ENCODE measurements at regions of chr15 and their contacts with region 1.

Region 1: DNA sequence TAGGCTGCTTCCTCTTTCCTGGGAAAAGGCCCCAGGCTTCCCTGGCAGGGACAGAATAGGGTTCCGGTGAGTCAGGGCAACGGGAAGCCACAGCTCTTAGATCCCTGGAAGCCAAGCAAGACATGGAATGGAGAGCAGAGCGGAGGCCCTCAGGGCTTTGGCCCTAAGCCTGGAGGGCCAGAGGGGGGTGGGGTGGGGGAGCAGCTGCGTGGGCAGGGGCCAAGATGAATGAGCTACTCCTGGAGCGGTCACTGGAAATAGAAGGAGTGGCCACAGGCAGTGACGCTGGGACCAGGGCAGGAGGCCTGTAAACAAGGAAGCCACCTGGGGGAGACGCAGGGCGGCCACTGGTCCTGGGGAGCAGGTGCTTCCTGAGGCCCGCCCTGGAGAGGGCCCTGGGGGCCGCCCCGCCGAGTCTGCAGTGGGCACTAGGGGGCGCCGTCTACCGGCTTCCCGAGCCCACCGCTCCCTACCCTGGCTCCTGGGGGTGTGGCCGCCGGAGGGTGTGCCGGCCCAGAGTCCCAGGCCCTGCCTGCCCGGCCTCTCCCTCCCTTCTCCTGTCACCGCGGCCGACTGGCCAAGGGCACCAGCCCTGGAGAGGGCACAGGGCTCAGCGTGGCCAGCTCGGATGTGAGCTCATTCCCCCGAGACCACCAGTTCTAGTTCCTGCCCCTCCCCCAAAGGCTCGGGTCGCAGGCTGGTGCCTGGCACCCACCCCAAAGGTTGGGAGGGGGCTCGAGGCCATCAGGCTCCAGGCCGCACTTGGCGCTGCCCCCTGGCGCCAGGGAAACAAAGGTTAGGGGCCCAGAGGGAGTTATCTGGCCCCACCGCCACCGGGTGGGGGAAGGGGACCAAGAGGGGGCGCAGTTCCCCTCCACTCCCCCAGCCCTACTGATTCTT is 12.1 kb downstream of the VPS18 start:
- DNase-seq: peak; percentile 98
- ATAC-seq: peak; percentile 80
- H3K4me3 ChIP-seq: peak overlapping the region; percentile 67
- H3K27ac ChIP-seq: peak overlapping the region; percentile 98
- H3K4me1 ChIP-seq: peaks cover 29% of the 10 kb centered on the region
- H3K27me3 ChIP-seq: no peaks in the 10 kb centered on the region
- CTCF ChIP-seq: peak; percentile 85

Region 2: DNA sequence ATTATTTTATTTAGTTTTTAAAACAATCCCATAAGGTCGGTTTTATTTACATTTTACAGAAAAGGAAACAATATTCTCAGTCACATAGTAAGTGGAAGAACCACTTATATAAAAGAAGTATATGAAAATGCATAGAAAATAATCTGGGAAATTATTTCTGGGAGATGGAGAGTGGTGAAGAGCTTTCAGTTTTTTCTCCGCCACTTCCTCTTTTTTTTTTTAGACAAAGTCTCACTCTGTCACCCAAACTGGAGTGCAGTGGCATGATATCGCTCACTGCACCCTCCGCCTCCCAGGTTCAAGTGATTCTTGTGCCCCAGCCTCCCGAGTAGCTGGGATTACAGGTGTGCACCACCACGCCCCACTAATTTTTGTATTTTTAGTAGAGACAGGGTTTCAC is 190.2 kb before region 1 on chr15:
- CTCF ChIA-PET with region 1: no interaction called
- POLR2A ChIA-PET with region 1: no interaction called
- intact Hi-C with region 1: no loop called
- DNase-seq: no peak
- ATAC-seq: no peak
- H3K4me3 ChIP-seq: no peak overlapping the region
- H3K27ac ChIP-seq: no peak overlapping the region
- H3K4me1 ChIP-seq: no peaks in the 10 kb centered on the region
- H3K27me3 ChIP-seq: no peaks in the 10 kb centered on the region
- CTCF ChIP-seq: no peak

Region 3: GRCh38 chr15:40825661-40826088 is 80.7 kb before region 1 on chr15:
- CTCF ChIA-PET with region 1: no interaction called
- POLR2A ChIA-PET with region 1: no interaction called
- intact Hi-C with region 1: no loop called
- DNase-seq: peak; percentile 81
- ATAC-seq: peak; percentile 36
- H3K4me3 ChIP-seq: peak overlapping the region; percentile 7; the same call in 1 of the 2 replicates
- H3K27ac ChIP-seq: peak overlapping the region; percentile 87
- H3K4me1 ChIP-seq: peaks cover 40% of the 10 kb centered on the region
- H3K27me3 ChIP-seq: no peaks in the 10 kb centered on the region
- CTCF ChIP-seq: no peak

Region 4: DNA sequence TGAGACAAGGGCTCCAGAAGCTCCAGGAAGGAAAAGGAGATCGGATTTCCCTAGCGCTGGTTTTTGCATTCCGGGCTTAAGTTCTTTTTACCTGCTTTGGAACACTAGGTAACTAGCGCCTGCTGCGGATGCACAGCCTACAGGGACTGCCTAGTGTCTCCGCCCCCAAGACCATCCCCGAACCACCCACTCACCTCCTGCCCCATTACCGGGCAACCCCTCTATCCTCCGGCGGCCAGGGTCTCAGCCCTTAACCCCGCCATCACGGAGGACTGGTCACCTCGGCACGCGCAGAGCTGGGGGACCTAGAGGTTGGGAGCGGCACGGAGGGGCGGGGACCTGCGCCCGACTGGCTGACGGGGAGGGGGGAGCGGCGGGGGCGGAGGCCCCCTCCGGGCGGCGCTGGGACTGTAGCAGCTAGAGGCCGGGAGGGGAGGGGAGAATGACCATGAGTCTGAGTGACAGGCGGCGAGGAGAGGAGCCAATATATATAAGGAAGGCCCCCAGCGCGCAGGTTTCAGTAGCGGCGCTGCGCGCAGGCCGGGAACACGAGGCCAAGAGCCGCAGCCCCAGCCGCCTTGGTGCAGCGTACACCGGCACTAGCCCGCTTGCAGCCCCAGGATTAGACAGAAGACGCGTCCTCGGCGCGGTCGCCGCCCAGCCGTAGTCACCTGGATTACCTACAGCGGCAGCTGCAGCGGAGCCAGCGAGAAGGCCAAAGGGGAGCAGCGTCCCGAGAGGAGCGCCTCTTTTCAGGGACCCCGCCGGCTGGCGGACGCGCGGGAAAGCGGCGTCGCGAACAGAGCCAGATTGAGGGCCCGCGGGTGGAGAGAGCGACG is 22.7 kb after region 1 on chr15 and contains the start of gene DLL4:
- CTCF ChIA-PET with region 1: interaction called, 16 read pairs
- POLR2A ChIA-PET with region 1: interaction called, 14 read pairs
- intact Hi-C with region 1: loop called (anchors 1 kb)
- DNase-seq: peak; percentile 77
- ATAC-seq: peak; percentile 49
- H3K4me3 ChIP-seq: peak within 1 kb of the TSS; percentile 76
- H3K27ac ChIP-seq: no peak within 1 kb of the TSS
- H3K4me1 ChIP-seq: peaks cover 45% of the 10 kb centered on the region
- H3K27me3 ChIP-seq: peaks cover 25% of the 10 kb centered on the region
- CTCF ChIP-seq: no peak
- total RNA-seq, gene DLL4: 2.2 and 2.9 TPM in 2 replicates

Region 5: DNA sequence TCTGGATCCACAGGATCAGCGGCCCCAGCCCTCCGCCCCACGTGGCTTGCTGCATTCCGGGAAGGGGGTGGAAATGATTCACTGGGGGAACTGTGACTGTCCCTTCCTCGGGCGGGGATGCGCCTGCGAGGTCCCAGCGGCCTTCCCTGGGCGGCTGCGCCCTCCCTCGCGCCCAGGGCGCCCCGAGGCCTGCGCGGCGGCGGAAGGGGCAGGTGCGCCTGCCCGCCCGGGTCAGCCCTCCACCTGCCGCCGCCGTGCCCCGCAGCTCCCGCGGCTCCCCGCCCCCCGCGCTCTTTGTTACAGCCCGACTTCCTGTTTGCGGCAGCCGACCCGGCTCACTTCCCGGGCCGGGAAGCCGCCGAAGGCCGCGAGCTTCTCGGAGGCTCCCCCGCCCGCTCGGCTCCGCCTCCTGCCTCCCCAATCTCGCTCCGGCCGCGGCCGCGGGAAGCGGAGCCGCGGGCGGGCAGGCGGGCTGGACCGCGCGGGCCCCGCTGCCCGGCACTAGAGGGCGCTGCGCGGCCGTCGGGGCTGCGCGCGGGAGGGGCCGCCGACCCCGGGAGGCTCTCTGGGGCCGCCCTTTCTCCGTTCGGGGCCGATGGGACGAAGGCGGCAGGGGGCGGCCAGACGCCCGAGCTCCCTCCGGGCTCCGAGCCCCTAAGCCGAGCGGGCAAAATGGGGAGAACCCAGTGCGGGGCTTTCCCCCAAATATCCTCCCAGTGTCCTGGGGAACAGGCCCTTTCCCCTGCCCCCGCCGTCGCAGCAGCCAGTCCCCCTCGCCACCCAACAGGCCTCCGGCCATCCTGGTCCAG is 35.4 kb after region 1 on chr15:
- CTCF ChIA-PET with region 1: interaction called, 22 read pairs
- POLR2A ChIA-PET with region 1: interaction called, 11 read pairs
- intact Hi-C with region 1: loop called (anchors 5 kb)
- DNase-seq: peak; percentile 84
- ATAC-seq: peak; percentile 78
- H3K4me3 ChIP-seq: peak overlapping the region; percentile 71
- H3K27ac ChIP-seq: peak overlapping the region; percentile 58
- H3K4me1 ChIP-seq: peaks cover 29% of the 10 kb centered on the region
- H3K27me3 ChIP-seq: no peaks in the 10 kb centered on the region
- CTCF ChIP-seq: peak; percentile 43

Region 6: DNA sequence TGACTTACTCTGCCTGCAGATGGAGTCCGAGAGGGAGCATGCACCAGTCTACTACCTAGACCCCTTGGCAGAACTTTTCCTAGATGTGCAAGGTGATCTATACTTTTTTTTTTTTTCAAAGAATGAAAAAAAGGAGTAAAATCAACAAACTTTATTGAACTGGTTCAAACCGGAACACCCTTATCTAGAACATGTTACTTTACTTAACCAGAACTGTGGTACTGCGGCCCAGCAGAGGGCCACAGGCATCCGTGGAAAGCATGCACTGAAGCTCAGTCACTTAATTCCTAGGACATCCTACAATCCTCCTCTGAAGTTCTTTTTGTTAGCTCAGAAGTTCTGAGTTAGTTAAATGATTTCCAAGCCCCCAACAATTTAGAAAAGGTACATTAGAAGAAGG is 68.5 kb after region 1 on chr15:
- CTCF ChIA-PET with region 1: no interaction called
- POLR2A ChIA-PET with region 1: no interaction called
- intact Hi-C with region 1: loop called (anchors 1 kb)
- DNase-seq: no peak
- ATAC-seq: no peak
- H3K4me3 ChIP-seq: no peak overlapping the region
- H3K27ac ChIP-seq: no peak overlapping the region
- H3K4me1 ChIP-seq: peaks cover 25% of the 10 kb centered on the region
- H3K27me3 ChIP-seq: no peaks in the 10 kb centered on the region
- CTCF ChIP-seq: no peak

Region 7: DNA sequence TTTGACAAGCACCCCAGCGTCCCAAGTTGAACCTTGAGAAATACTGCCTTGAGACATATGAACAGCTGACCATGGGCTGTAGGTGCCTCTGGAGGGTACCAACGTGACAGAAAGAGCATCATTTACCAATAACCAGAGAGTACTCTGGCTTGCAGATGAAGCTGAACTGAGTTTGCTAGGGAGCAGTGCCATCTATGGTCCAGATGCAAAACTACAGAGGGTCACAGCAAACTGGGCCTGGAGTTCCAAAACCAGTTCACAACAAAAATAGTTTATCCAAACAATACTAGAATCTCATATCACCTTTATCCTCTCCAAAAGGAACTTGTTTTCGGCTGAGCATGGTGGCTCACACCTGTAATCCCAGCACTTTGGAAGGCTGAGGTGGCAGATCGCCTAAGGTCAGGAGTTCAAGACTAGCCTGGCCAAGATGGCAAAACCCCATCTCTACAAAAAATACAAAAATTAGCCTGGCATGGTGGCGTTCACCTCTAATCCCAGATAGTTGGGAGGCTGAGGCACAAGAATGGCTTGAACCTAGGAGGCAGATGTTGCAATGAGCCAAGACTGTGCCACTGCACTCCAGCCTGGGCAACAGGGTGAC is 116.2 kb after region 1 on chr15:
- CTCF ChIA-PET with region 1: interaction called, 17 read pairs
- POLR2A ChIA-PET with region 1: no interaction called
- intact Hi-C with region 1: loop called (anchors 1 kb)
- DNase-seq: peak; percentile 68
- ATAC-seq: peak; percentile 69
- H3K4me3 ChIP-seq: no peak overlapping the region
- H3K27ac ChIP-seq: no peak overlapping the region
- H3K4me1 ChIP-seq: peaks cover 13% of the 10 kb centered on the region
- H3K27me3 ChIP-seq: no peaks in the 10 kb centered on the region
- CTCF ChIP-seq: peak; percentile 84

Region 8: GRCh38 chr15:41180206-41180789 is 274.0 kb after region 1 on chr15:
- CTCF ChIA-PET with region 1: interaction called, 3 read pairs
- POLR2A ChIA-PET with region 1: no interaction called
- intact Hi-C with region 1: loop called (anchors 1 kb)
- DNase-seq: peak; percentile 23
- ATAC-seq: no peak
- H3K4me3 ChIP-seq: no peak overlapping the region
- H3K27ac ChIP-seq: no peak overlapping the region
- H3K4me1 ChIP-seq: 0 out of 2 replicates have a peak, but pooled peaks cover 5% of the 10 kb centered on the region
- H3K27me3 ChIP-seq: no peaks in the 10 kb centered on the region
- CTCF ChIP-seq: no peak

Measured in PC-3 (cell line).